ENCODE measurements at regions of chr19 and their contacts with region 1.

Region 1: DNA sequence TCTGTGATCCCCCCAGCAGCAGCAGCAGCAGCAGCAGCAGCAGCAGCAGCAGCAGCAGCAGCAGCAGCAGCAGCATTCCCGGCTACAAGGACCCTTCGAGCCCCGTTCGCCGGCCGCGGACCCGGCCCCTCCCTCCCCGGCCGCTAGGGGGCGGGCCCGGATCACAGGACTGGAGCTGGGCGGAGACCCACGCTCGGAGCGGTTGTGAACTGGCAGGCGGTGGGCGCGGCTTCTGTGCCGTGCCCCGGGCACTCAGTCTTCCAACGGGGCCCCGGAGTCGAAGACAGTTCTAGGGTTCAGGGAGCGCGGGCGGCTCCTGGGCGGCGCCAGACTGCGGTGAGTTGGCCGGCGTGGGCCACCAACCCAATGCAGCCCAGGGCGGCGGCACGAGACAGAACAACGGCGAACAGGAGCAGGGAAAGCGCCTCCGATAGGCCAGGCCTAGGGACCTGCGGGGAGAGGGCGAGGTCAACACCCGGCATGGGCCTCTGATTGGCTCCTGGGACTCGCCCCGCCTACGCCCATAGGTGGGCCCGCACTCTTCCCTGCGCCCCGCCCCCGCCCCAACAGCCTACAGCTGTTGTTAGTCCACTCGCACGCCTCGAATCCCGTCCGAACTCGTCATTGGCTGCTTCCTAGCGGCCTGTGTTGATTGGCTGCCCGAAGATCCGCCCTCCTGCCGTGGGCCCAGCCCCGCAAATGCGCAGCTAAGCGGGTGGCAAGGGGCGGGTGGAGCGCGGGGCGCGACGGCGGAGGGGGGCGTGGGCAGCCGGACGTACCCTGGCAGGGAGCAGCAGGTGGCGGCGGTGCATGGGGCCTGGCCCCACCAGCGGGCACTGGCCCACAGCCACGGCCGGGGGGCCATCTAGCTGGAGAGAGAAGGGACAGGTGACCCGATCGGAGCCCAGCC is 1.4 kb upstream of the SIX5 start:
- DNase-seq: peak; percentile 96
- H3K4me3 ChIP-seq: peak overlapping the region; percentile 55 to 61
- H3K27ac ChIP-seq: peak overlapping the region; percentile 79 to 95
- H3K4me1 ChIP-seq: peaks cover 8 to 30% of the 10 kb centered on the region in 2 experiments; a peak in 3 of 4 replicates
- H3K27me3 ChIP-seq: no peaks in the 10 kb centered on the region
- CTCF ChIP-seq: peak; percentile 89
- EP300 ChIP-seq: no peak; a peak in 1 of 4 replicates
- RAD21 ChIP-seq: peak; percentile 73

Region 2: GRCh38 chr19:45717166-45717982 is 53.1 kb before region 1 on chr19:
- CTCF ChIA-PET with region 1: interaction called, 11 read pairs
- POLR2A ChIA-PET with region 1: interaction called, 11 read pairs
- DNase-seq: peak; percentile 97
- H3K4me3 ChIP-seq: peak overlapping the region; percentile 66 to 67
- H3K27ac ChIP-seq: peak overlapping the region; percentile 74 to 77
- H3K4me1 ChIP-seq: peaks cover 0 to 9% of the 10 kb centered on the region in 2 experiments; a peak in 1 of 4 replicates
- H3K27me3 ChIP-seq: no peaks in the 10 kb centered on the region
- CTCF ChIP-seq: no peak
- EP300 ChIP-seq: no peak; a peak in 2 of 4 replicates
- RAD21 ChIP-seq: no peak

Region 3: DNA sequence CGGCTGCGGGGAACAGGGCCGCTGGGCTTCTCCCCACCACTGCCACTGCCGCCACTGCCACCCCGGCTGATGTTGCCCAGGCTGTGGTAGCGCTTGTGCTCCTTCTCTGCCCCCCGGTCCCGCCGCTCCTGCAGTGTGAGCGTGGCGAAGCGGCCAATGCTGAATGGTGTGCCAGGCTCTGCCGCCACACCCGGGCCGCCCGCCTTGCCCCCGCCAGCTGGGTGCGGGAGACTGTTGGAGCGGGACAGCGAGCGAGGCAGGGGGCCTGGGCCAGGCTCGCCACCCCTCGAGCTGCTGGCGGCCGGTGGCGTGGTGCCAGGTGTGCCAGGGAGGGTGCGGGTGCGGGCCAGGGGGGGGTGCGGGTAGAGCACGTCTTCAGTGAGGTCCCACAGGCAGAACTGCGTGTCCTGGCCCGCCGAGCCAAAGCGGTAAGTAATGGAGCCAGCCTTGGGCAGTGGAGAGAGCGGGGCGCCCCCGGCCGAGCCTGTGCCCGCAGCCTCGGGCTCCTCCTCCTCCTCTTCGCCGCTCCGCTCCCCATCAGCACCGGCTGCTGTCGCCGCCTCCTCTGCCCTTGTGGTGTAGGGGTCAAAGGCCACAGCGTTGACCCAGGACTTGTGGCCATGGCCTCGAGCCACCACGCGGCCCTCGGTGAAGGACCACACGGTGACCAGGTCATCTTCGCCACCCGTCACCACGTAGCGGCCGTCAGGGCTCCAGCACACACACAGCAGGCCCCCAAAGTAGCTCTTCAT is 15.5 kb after region 1 on chr19:
- CTCF ChIA-PET with region 1: interaction called, 33 read pairs
- POLR2A ChIA-PET with region 1: interaction called, 7 read pairs
- DNase-seq: no peak
- H3K4me3 ChIP-seq: no peak overlapping the region
- H3K27ac ChIP-seq: peak overlapping the region in 1 of 2 experiments; percentile 99; a peak in 1 of 4 replicates
- H3K4me1 ChIP-seq: peaks cover 22 to 32% of the 10 kb centered on the region in 2 experiments; a peak in 3 of 4 replicates
- H3K27me3 ChIP-seq: no peaks in the 10 kb centered on the region
- CTCF ChIP-seq: no peak
- EP300 ChIP-seq: no peak
- RAD21 ChIP-seq: no peak

Region 4: GRCh38 chr19:45792470-45793177 is 22.2 kb after region 1 on chr19 and contains the start of gene DMWD:
- CTCF ChIA-PET with region 1: interaction called, 100 read pairs
- POLR2A ChIA-PET with region 1: interaction called, 3 read pairs
- DNase-seq: peak; percentile 99
- H3K4me3 ChIP-seq: peak within 1 kb of the TSS; percentile 68 to 74
- H3K27ac ChIP-seq: peak within 1 kb of the TSS; percentile 55 to 76; a peak in 3 of 4 replicates
- H3K4me1 ChIP-seq: peaks cover 0 to 18% of the 10 kb centered on the region in 2 experiments; a peak in 1 of 4 replicates
- H3K27me3 ChIP-seq: no peaks in the 10 kb centered on the region
- CTCF ChIP-seq: no peak
- EP300 ChIP-seq: no peak
- RAD21 ChIP-seq: no peak
- polyA plus RNA-seq, gene DMWD: 39.3 and 40.6 TPM in 2 replicates

Region 5: DNA sequence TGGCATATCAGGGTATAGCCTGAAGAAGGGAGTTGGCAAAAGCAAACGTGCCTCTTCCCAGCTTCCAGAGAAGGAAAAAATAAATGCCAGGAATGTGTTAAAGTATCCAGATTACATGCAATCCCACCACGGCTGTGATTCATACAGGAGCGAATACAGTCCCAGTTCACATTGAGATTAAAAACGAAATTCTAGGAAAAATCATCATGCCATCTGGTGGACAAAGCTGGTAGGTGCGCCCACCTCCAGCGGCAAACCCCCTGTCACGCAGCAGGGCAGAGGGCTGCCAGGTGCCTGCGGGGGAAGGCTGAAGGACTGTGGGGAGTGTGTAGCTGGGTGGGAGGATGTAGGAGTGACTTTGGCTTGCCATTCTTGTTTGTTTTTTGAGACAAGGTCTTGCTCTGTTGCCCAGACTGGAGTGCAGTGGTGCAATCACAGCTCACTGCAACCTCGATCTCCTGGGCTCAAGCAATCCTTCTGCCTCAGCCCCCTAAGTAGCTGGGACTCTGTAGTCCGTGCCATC is 28.6 kb after region 1 on chr19:
- CTCF ChIA-PET with region 1: interaction called, 100 read pairs
- POLR2A ChIA-PET with region 1: interaction called, 19 read pairs
- DNase-seq: peak; percentile 91
- H3K4me3 ChIP-seq: no peak overlapping the region
- H3K27ac ChIP-seq: peak overlapping the region in 1 of 2 experiments; percentile 25; a peak in 1 of 4 replicates
- H3K4me1 ChIP-seq: peaks cover 2 to 3% of the 10 kb centered on the region in 2 experiments; a peak in 2 of 4 replicates
- H3K27me3 ChIP-seq: no peaks in the 10 kb centered on the region
- CTCF ChIP-seq: peak; percentile 87
- EP300 ChIP-seq: no peak
- RAD21 ChIP-seq: peak; percentile 71

Region 6: GRCh38 chr19:45848922-45849321 is 78.5 kb after region 1 on chr19:
- CTCF ChIA-PET with region 1: no interaction called
- POLR2A ChIA-PET with region 1: no interaction called
- DNase-seq: no peak
- H3K4me3 ChIP-seq: no peak overlapping the region
- H3K27ac ChIP-seq: no peak overlapping the region
- H3K4me1 ChIP-seq: no peaks in the 10 kb centered on the region
- H3K27me3 ChIP-seq: no peaks in the 10 kb centered on the region
- CTCF ChIP-seq: peak; percentile 41
- EP300 ChIP-seq: no peak
- RAD21 ChIP-seq: no peak

Measured in SK-N-SH (cell line).